Caco-2 (cell line): ENCODE measurements at regions of chr12 and their contacts with region 1.

Region 1: DNA sequence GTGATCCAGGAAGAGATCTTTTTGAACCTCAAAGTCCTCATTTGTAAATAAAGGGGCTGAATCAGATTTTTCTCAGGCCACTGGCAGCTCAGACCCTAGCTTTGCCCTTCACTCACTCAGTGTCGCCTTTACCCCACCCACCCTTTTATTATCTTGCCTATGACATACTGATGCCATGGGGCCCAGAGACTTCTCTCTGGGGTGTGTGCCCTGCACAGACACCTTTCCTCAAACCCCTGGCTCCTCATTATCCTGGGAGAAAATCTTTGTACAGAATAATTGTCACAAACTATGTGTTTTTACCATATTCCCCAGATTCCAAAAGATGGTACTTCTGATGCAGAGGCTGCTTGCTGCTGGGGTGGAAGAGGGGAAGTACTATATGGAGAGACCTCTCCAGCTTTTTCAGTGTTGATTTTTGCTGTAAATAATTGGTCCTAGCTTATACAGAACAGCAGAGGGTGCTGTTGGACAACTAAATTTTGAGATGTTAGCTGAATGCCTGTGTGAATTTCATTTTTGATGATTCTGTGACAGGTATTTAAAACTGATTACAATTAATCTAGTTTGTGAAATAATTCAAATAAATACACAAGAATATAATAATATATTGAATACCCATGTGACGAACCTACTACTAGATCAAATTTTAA is 53.9 kb upstream of the DCD start:
- DNase-seq: peak in 1 of 2 experiments; percentile 22
- H3K4me3 ChIP-seq: no peak overlapping the region
- H3K4me3 Mint-ChIP-seq: no peak overlapping the region
- H3K27ac Mint-ChIP-seq: no peak overlapping the region
- H3K4me1 ChIP-seq: peaks cover 8% of the 10 kb centered on the region; the same call in 1 of the 2 replicates
- H3K4me1 Mint-ChIP-seq: peaks cover 8% of the 10 kb centered on the region
- H3K27me3 ChIP-seq: no peaks in the 10 kb centered on the region
- H3K27me3 Mint-ChIP-seq: peaks cover 5% of the 10 kb centered on the region
- CTCF ChIP-seq: peak in 1 of 2 experiments; percentile 59

Region 2: DNA sequence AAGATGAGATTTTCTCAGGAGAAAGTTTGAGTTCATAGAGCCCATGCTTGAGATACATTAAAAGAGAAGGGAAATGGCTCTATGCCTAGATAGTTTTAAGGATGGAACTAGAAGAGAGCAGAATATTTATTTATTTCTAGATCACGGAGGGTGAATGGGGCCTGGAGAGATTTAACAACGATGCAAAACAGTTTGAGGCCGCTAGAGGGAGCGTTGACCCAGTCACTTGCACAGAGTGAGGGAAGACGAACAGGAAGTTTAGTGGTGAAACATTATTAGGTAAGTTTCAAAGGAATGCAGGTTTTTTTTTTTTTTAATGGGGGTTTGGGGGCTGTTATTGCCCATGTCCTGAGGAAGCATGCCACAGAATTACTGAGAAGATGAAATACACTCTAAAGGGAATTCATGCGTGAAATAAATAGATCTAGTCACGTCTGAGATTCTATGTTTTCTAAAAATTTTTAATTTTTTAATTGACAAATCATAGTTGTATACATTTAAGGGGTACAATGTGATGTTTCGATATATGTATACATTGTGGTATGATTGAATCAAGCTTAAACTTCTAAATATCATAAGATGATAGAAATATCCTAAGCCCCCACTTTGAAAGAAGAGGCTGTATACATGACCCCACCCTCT is 98.8 kb before region 1 on chr12:
- CTCF ChIA-PET with region 1: no interaction called
- POLR2A ChIA-PET with region 1: no interaction called
- intact Hi-C with region 1: no loop called
- DNase-seq: peak in 1 of 2 experiments; percentile 67
- H3K4me3 ChIP-seq: no peak overlapping the region
- H3K4me3 Mint-ChIP-seq: no peak overlapping the region
- H3K27ac Mint-ChIP-seq: no peak overlapping the region
- H3K4me1 ChIP-seq: no peaks in the 10 kb centered on the region
- H3K4me1 Mint-ChIP-seq: peaks cover under 1% of the 10 kb centered on the region
- H3K27me3 ChIP-seq: no peaks in the 10 kb centered on the region; the same call in none of the 2 replicates
- H3K27me3 Mint-ChIP-seq: peaks cover 23% of the 10 kb centered on the region
- CTCF ChIP-seq: peak; percentile 74 to 82

Region 3: GRCh38 chr12:54641554-54641953 is 60.5 kb before region 1 on chr12:
- CTCF ChIA-PET with region 1: no interaction called
- POLR2A ChIA-PET with region 1: no interaction called
- intact Hi-C with region 1: no loop called
- DNase-seq: no peak
- H3K4me3 ChIP-seq: no peak overlapping the region
- H3K4me3 Mint-ChIP-seq: no peak overlapping the region
- H3K27ac Mint-ChIP-seq: no peak overlapping the region
- H3K4me1 ChIP-seq: no peaks in the 10 kb centered on the region
- H3K4me1 Mint-ChIP-seq: no peaks in the 10 kb centered on the region
- H3K27me3 ChIP-seq: peaks cover 2% of the 10 kb centered on the region
- H3K27me3 Mint-ChIP-seq: peaks cover 19% of the 10 kb centered on the region
- CTCF ChIP-seq: no peak

Region 4: DNA sequence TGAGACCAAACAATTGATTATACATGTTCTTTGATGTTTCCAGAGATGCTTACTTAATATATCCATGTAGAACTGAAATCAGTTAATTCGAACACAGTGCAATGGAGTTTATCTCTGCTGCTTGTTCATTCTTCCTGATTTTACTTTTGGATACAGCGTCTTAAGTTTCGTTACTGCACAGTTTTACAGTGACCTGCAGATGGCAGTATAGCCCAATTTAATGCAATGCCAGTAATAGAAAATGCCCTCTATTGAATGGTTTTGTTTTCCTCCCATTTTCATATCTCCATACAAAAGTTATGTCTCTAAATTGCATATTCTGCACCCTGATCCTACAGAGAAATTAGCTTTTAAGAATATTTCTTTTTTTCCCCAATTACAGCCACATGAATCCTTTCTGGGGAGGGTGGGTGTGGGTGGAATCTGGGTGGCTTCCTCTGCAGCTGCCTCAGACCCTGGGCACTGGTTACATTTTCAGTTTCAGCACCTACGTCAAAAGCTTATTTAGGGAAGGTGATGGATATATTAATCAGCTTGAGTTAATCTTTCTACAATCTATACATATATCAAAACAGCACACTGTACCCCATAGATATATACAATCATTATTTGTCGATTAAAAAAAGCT is 47.2 kb after region 1 on chr12:
- CTCF ChIA-PET with region 1: no interaction called
- POLR2A ChIA-PET with region 1: no interaction called
- intact Hi-C with region 1: loop called (anchors 2 kb)
- DNase-seq: peak in 1 of 2 experiments; percentile 44
- H3K4me3 ChIP-seq: no peak overlapping the region
- H3K4me3 Mint-ChIP-seq: no peak overlapping the region
- H3K27ac Mint-ChIP-seq: no peak overlapping the region
- H3K4me1 ChIP-seq: no peaks in the 10 kb centered on the region
- H3K4me1 Mint-ChIP-seq: no peaks in the 10 kb centered on the region
- H3K27me3 ChIP-seq: no peaks in the 10 kb centered on the region
- H3K27me3 Mint-ChIP-seq: peaks cover 6% of the 10 kb centered on the region
- CTCF ChIP-seq: peak; percentile 36 to 58

Region 5: DNA sequence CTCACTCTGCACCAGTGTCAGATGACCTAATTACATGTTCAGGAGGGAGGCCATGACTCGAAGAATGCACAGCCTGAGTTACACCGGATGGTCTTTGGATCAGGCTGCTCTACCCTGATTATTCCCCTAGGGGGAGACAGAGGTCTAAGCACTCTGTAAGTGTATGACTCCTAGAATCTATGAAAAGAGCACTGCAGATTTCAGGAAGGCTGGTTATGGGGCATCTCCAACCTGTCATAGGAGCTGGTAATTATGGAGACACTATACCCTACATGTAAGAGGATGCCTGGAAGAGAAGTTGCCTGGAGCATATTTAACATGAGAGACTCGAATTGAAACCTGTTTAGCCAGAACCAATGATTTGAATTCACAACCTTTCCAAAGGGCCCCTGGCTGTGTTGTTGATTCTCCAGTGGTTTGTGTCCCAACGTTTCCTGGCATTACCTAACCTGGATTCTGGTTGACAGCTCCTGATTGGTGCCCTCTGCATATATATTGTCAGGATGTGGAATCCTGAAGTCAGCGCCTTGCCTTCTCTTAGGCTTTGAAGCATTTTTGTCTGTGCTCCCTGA is 152.0 kb after region 1 on chr12 and contains the start of gene MUCL1:
- CTCF ChIA-PET with region 1: no interaction called
- POLR2A ChIA-PET with region 1: no interaction called
- intact Hi-C with region 1: loop called (anchors 1 kb)
- DNase-seq: peak; percentile 67 to 73
- H3K4me3 ChIP-seq: no peak within 1 kb of the TSS
- H3K4me3 Mint-ChIP-seq: no peak within 1 kb of the TSS
- H3K27ac Mint-ChIP-seq: no peak within 1 kb of the TSS
- H3K4me1 ChIP-seq: no peaks in the 10 kb centered on the region
- H3K4me1 Mint-ChIP-seq: no peaks in the 10 kb centered on the region
- H3K27me3 ChIP-seq: no peaks in the 10 kb centered on the region
- H3K27me3 Mint-ChIP-seq: peaks cover 16% of the 10 kb centered on the region
- CTCF ChIP-seq: peak; percentile 74 to 78
- total RNA-seq, gene MUCL1: not detected in 2 replicates